Activated T-helper 2 cell treated with anti-CD3 and anti-CD28 coated beads, Interferon-gamma antibody, Interleukin-2, Interleukin-4, amounts not matched to agents 10 μg/mL and 5 μg/mL and 100 μg/mL, durations not matched to agents 14 hours and 24 hours and 36 hours (primary cell): ENCODE measurements at regions of chr5 and their contacts with region 1.

Region 1: GRCh38 chr5:91266184-91266705 is 116.9 kb downstream of the ARRDC3 start:
- DNase-seq: no peak
- H3K4me3 Mint-ChIP-seq: no peak overlapping the region
- H3K27ac Mint-ChIP-seq: no peak overlapping the region
- H3K4me1 Mint-ChIP-seq: peaks cover 25% of the 10 kb centered on the region
- H3K27me3 Mint-ChIP-seq: peaks cover 2% of the 10 kb centered on the region

Region 2: GRCh38 chr5:91206734-91207133 is 59.5 kb before region 1 on chr5:
- intact Hi-C with region 1: no loop called
- DNase-seq: no peak
- H3K4me3 Mint-ChIP-seq: no peak overlapping the region
- H3K27ac Mint-ChIP-seq: no peak overlapping the region
- H3K4me1 Mint-ChIP-seq: no peaks in the 10 kb centered on the region
- H3K27me3 Mint-ChIP-seq: peaks cover 3% of the 10 kb centered on the region

Region 3: DNA sequence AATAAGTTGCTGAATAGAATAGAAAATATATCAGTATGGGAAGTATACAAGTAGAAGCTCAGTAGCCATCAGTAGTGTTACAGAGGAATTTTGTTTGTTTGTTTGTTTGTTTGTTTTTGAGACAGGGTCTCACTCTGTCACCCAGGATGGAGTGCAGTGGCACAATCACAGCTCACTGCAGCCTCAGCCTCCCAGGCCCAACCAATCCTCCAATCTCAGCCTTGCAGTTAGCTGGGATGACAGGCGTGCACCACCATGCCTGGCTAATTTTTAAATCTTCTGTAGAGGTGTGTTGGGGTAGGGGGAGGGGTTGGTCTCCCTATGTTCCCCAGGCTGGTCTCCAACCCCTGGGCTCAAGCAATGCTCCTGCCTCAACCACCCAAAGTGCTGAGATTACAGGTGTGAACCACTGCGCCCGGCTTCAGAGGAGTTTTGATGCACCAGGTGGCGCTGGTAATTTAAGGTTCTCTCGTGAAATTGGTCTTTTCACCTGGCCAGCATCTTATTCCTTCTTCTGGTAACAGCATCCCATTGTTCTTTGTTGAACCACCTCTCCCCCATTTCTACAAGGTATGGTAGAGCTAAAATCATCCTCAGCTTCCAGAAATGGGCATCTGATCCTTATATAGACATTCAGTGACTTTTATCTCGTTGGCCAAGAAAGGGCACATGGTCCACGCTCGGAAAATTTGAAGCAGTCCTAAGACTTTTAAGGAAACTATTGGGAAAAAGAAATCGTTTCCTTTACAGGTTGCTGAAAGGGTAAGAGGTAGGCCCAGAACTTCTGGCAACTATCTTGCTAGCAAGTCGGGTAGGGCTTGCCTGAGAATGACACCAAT is 40.2 kb before region 1 on chr5:
- intact Hi-C with region 1: loop called (anchors 5 kb)
- DNase-seq: peak; percentile 26
- H3K4me3 Mint-ChIP-seq: no peak overlapping the region
- H3K27ac Mint-ChIP-seq: no peak overlapping the region
- H3K4me1 Mint-ChIP-seq: peaks cover 4% of the 10 kb centered on the region
- H3K27me3 Mint-ChIP-seq: peaks cover 18% of the 10 kb centered on the region

Region 4: DNA sequence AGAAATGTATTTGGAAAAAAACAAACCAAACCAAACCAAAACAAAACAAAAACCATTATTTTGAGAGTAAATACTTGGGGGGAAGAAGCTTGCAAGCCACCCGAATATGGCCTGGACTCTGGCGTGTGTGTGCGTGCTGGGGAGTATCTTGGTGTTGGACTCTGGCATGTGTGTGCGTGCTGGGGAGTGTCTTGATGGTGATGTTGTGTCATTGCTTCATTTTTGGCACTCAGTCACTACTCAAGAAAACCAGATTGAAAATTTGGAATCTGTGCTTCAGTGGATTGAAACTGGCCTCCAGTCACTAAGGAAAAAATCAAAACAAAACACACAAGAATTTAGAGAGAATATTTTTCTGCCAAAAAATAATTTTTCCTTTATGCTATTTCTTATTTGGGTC is 40.8 kb after region 1 on chr5:
- intact Hi-C with region 1: no loop called
- DNase-seq: no peak
- H3K4me3 Mint-ChIP-seq: no peak overlapping the region
- H3K27ac Mint-ChIP-seq: no peak overlapping the region
- H3K4me1 Mint-ChIP-seq: peaks cover 15% of the 10 kb centered on the region
- H3K27me3 Mint-ChIP-seq: no peaks in the 10 kb centered on the region